BJ (cell line): ENCODE measurements at regions of chr16 and their contacts with region 1.

Region 1: DNA sequence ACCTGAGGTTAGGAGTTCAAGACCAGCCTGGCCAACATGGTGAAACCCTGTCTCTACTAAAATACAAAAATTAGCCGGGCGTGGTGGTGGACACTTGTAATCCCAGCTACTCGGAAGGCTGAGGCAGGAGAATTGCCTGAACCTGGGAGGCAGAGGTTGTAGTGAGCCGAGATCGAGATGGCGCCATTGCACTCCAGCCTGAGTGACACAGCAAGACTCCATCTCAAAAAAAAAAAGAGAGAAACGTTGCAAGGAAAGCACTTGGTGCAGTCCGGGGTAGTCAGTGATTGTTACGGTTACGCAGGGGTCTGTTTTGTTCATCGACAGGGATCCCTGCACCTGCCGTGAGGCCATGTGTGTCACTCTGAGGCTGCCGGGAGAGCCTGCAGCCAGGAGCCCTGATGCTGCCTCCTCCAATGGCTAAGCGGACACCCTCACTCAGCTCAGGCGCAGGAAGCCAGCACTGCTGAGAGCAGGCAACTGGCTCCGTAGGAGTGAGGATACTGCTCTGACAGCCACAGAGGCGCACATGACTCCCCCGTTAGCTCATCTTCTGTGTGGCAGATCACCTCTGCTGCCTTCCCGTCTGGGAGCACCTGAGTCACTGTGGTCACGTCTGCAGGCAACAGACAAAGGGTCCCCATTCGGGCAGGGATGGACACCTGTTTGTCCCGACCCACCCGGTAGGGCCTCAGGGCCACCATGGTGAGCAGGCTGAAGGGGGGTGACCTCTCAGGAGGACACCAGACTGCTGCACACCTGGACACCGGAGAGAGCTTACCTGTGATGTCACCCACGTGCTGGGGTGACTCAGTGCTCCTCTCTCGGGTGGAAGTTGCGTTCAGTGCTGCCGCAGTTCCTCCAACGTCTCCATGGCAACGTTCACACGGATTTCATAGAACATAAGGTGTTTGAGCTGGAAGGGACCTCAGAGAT is 5.2 kb upstream of the RAB26 start:
- DNase-seq: no peak
- H3K4me3 ChIP-seq: no peak overlapping the region
- H3K27me3 ChIP-seq: no peaks in the 10 kb centered on the region
- CTCF ChIP-seq: no peak

Region 2: GRCh38 chr16:2003827-2004641 is 139.2 kb before region 1 on chr16:
- CTCF ChIA-PET with region 1: interaction called, 30 read pairs
- POLR2A ChIA-PET with region 1: no interaction called
- DNase-seq: peak; percentile 12
- H3K4me3 ChIP-seq: no peak overlapping the region
- H3K27me3 ChIP-seq: no peaks in the 10 kb centered on the region
- CTCF ChIP-seq: peak; percentile 98

Region 3: GRCh38 chr16:2016407-2016922 is 126.7 kb before region 1 on chr16:
- CTCF ChIA-PET with region 1: interaction called, 29 read pairs
- POLR2A ChIA-PET with region 1: no interaction called
- DNase-seq: no peak
- H3K4me3 ChIP-seq: no peak overlapping the region
- H3K27me3 ChIP-seq: peaks cover 6% of the 10 kb centered on the region; the same call in 1 of the 2 replicates
- CTCF ChIP-seq: peak; percentile 53

Region 4: GRCh38 chr16:2121853-2122252 is 21.4 kb before region 1 on chr16:
- CTCF ChIA-PET with region 1: interaction called, 14 read pairs
- POLR2A ChIA-PET with region 1: no interaction called
- DNase-seq: no peak
- H3K4me3 ChIP-seq: no peak overlapping the region
- H3K27me3 ChIP-seq: no peaks in the 10 kb centered on the region
- CTCF ChIP-seq: no peak

Region 5: GRCh38 chr16:2155091-2156021 is 12.1 kb after region 1 on chr16 and contains the start of gene TRAF7:
- CTCF ChIA-PET with region 1: interaction called, 22 read pairs
- POLR2A ChIA-PET with region 1: interaction called, 4 read pairs
- DNase-seq: peak; percentile 100
- H3K4me3 ChIP-seq: peak within 1 kb of the TSS; percentile 87
- H3K27me3 ChIP-seq: no peaks in the 10 kb centered on the region
- CTCF ChIP-seq: no peak
- polyA plus RNA-seq, gene TRAF7: 37.0 and 68.1 TPM in 2 replicates